Testis (tissue), 5 donors: ENCODE measurements at regions of chr10 and their contacts with region 1.

Region 1: GRCh38 chr10:58435297-58435985 is 50.2 kb downstream of the TFAM start:
- DNase-seq: no peak
- H3K4me3 ChIP-seq: no peak overlapping the region
- H3K27ac ChIP-seq: no peak overlapping the region
- H3K4me1 ChIP-seq: no peaks in the 10 kb centered on the region
- H3K27me3 ChIP-seq: no peaks in the 10 kb centered on the region
- CTCF ChIP-seq: no peak
- POLR2A ChIP-seq: no peak

Region 2: DNA sequence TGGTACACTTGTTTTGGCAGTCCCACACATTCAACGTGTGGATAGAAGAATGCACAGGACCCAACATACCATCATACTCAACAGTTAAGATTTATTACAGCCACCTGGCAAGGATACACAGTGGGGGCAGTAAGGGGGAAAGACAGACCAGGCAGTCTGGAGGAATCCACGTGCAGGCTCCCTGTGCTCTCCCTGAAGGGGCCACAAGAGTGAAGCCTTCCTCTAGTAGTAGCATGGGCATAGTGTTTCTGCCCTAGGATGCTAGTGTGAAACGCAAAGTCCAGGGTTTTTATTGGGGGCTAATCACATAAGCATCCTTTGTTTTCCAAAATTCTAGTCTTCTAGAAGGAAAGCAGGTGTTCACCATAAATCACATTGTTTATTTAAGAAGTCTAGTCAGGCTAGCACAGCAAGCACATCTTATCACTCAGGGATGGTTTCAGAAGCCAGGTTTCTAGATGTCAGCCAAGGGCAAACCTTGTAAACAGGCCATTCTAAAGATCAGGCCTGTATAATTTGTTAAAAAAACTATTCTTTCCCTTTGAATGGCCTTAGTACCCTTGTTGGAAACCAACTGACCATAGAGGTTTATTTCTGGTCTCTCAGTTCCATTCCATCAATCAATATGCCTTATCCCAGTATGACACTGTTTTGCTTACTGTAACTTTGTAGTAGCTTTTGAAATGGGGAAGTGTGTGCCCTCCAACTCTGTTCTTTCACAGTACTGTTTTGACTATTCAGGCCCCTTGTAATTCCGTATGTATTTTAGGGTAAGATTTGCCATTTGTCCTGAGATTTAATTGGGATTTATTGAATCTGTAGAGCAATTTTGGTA is 62.6 kb before region 1 on chr10:
- intact Hi-C with region 1: no loop called
- DNase-seq: no peak
- H3K4me3 ChIP-seq: no peak overlapping the region
- H3K27ac ChIP-seq: no peak overlapping the region
- H3K4me1 ChIP-seq: no peaks in the 10 kb centered on the region
- H3K27me3 ChIP-seq: no peaks in the 10 kb centered on the region
- CTCF ChIP-seq: no peak
- POLR2A ChIP-seq: no peak

Region 3: DNA sequence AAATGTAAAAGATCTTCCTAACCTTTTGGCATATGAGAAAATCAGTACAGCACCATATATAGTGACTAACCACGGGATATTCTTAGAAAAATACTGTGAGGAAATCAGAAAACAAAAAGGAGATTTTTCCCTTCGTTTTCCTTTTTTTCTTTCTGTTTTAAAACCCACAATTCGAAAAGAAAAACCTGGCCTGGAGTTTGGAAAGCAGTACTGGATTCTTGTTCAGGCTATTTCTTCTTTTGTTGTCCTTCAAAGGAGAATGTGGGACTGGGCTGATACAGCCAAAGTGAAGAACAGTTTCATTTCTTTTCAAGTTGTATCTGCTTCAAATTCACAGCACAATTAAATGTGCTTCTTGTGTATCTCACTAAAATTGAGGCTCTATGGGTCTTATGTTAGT is 584.2 kb after region 1 on chr10:
- intact Hi-C with region 1: loop called (anchors 10 kb)
- DNase-seq: no peak
- H3K4me3 ChIP-seq: no peak overlapping the region
- H3K27ac ChIP-seq: peak overlapping the region in 1 of 2 donors; percentile 20
- H3K4me1 ChIP-seq: no peaks in the 10 kb centered on the region
- H3K27me3 ChIP-seq: no peaks in the 10 kb centered on the region
- CTCF ChIP-seq: no peak
- POLR2A ChIP-seq: no peak